Activated B cell treated with CpG ODN at 0.5 μM for 24 hours (primary cell): ENCODE measurements at regions of chr10 and their contacts with region 1.

Region 1: GRCh38 chr10:45373576-45374349 is at the start of gene ALOX5:
- DNase-seq: peak; percentile 67
- ATAC-seq: peak; percentile 53
- H3K4me3 Mint-ChIP-seq: peak within 1 kb of the TSS; percentile 94
- H3K27ac Mint-ChIP-seq: peak within 1 kb of the TSS; percentile 93
- H3K4me1 Mint-ChIP-seq: peaks cover 88% of the 10 kb centered on the region
- H3K27me3 Mint-ChIP-seq: no peaks in the 10 kb centered on the region
- CTCF ChIP-seq: no peak
- total RNA-seq, gene ALOX5: 153 and 181 TPM in 2 replicates

Region 2: GRCh38 chr10:45000752-45001380 is 372.9 kb before region 1 on chr10 and contains the start of gene ZNF22:
- CTCF ChIA-PET with region 1: no interaction called
- POLR2A ChIA-PET with region 1: no interaction called
- intact Hi-C with region 1: loop called (anchors 5 kb)
- DNase-seq: peak; percentile 76
- ATAC-seq: peak; percentile 82
- H3K4me3 Mint-ChIP-seq: peak within 1 kb of the TSS; percentile 90
- H3K27ac Mint-ChIP-seq: peak within 1 kb of the TSS; percentile 93
- H3K4me1 Mint-ChIP-seq: peaks cover 25% of the 10 kb centered on the region
- H3K27me3 Mint-ChIP-seq: no peaks in the 10 kb centered on the region
- CTCF ChIP-seq: no peak
- total RNA-seq, gene ZNF22: 34.2 and 37.5 TPM in 2 replicates

Region 3: DNA sequence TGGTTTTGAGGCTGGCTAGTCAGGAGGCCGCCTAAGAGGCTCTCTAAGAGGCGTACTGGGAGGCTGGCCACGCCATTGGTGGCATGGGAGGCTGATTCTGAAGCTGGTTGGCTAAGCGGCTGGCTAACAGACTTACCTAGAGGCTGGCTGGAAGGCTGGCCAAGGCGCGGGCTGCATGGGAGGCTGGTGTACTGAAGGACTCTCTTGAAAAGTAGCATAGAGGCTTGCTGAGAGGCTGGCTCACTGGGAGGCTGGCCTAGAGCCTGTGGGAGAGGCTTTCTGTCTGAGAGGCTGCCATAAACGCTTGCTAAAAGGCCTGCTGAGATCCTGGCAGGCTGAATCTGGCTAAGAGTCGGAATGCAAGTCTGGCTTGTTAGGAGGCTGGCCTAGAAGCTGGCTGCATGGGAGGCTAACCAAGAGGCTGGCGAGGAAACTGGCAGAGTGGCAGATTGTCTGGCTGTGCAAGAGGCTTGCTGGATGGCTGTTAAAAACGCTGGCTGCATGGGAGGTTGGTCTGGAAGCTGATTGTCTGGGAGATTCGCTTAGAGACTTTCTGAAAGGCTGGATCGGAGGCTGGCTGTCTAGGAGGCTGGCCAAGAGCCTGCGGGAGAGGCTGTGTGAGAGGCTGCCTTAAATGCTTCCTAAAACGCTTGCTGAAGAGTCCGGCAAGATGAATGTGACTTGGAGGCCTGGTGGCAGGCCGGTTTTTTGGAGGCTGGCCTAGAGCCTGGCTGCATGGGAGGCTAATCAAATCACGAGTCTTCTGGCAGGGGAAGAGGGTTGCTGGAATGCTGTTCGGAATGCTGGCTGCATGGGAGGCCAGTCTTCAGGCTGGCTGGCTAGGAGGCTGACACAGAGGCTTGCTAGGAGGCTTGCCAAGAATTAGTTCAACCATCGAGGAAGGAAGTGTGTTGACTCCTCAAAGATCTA is 192.6 kb before region 1 on chr10:
- CTCF ChIA-PET with region 1: no interaction called
- POLR2A ChIA-PET with region 1: no interaction called
- intact Hi-C with region 1: no loop called
- DNase-seq: no peak
- ATAC-seq: no peak
- H3K4me3 Mint-ChIP-seq: no peak overlapping the region
- H3K27ac Mint-ChIP-seq: no peak overlapping the region
- H3K4me1 Mint-ChIP-seq: no peaks in the 10 kb centered on the region
- H3K27me3 Mint-ChIP-seq: no peaks in the 10 kb centered on the region
- CTCF ChIP-seq: no peak

Region 4: DNA sequence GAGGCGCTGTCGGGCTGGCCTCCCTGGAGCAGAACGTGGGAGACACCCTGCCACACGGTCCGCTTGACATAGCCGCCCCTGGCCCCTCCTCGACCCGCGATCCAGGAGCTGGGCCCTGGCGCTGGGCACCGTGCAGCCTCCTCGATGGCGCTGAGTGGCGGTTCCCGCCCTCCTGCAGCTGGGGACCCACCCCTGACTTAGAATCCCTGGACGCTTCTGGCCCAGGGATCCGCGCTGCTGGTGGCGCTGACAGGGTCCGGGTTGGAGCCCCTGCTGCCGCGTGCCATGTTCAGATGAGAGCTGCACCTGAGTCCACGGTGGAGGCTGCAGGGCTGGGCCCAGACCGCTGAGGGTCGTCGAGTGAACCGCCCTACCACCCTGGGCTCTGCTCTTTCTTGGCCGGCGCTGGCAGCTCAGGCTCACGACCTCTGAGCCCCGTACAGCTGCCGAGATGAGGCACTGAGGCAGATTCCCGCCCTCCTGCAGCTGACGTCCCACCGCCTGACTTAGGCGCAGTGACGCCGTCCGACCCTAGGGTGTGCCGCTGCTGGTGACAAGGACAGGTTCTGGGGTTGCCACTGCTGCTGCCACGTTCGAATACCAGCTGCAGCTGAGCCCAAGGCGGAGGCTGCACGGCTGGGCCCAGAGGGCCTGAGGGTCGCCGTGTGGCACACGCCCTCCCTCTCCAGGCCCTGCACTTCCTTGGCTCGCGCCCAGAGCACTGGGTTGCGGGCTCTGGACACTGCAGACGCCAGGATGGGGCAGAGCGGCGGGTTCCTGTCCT is 175.0 kb before region 1 on chr10:
- CTCF ChIA-PET with region 1: no interaction called
- POLR2A ChIA-PET with region 1: no interaction called
- intact Hi-C with region 1: no loop called
- DNase-seq: no peak
- ATAC-seq: no peak
- H3K4me3 Mint-ChIP-seq: no peak overlapping the region
- H3K27ac Mint-ChIP-seq: no peak overlapping the region
- H3K4me1 Mint-ChIP-seq: no peaks in the 10 kb centered on the region
- H3K27me3 Mint-ChIP-seq: peaks cover 6% of the 10 kb centered on the region
- CTCF ChIP-seq: no peak

Region 5: DNA sequence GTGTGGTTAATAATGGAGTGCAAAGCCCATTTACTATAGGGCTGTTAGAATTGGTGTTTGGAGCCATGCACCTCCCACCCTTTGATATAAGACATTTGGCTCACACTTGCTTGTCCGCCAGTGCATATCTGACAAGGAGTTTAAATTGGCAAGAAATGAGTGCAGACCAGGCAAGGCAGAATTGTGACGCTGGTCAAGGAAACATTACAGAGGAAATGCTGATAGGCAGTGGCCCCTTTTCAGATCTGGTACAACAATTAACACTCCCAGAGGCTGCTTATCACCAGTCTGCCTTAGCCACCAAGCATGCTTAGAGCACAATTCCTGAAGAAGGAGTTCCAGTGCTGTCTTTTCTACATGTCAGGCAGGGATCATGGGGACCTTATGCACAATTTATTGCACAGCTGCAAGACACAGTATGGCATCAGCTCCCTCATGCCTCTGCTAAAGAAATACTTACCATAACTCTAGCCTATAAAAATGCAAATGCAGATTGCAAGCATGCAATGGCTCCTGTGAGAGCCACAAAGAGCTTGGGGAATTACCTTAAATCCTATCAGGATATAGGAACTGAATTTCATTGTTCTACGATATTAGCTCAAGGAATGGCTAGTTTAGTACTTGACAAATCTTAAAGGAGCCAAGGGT is 93.5 kb before region 1 on chr10:
- CTCF ChIA-PET with region 1: no interaction called
- POLR2A ChIA-PET with region 1: no interaction called
- intact Hi-C with region 1: no loop called
- DNase-seq: no peak
- ATAC-seq: no peak
- H3K4me3 Mint-ChIP-seq: no peak overlapping the region
- H3K27ac Mint-ChIP-seq: no peak overlapping the region
- H3K4me1 Mint-ChIP-seq: no peaks in the 10 kb centered on the region
- H3K27me3 Mint-ChIP-seq: no peaks in the 10 kb centered on the region
- CTCF ChIP-seq: no peak

Region 6: GRCh38 chr10:45308707-45309106 is 65.1 kb before region 1 on chr10:
- CTCF ChIA-PET with region 1: interaction called, 3 read pairs
- POLR2A ChIA-PET with region 1: interaction called, 3 read pairs
- intact Hi-C with region 1: loop called (anchors 5 kb)
- DNase-seq: no peak
- ATAC-seq: peak; percentile 18
- H3K4me3 Mint-ChIP-seq: no peak overlapping the region
- H3K27ac Mint-ChIP-seq: no peak overlapping the region
- H3K4me1 Mint-ChIP-seq: peaks cover 3% of the 10 kb centered on the region
- H3K27me3 Mint-ChIP-seq: no peaks in the 10 kb centered on the region
- CTCF ChIP-seq: no peak

Region 7: GRCh38 chr10:45404087-45404769 is 30.5 kb after region 1 on chr10:
- CTCF ChIA-PET with region 1: no interaction called
- POLR2A ChIA-PET with region 1: no interaction called
- intact Hi-C with region 1: loop called (anchors 2 kb)
- DNase-seq: no peak
- ATAC-seq: peak; percentile 84
- H3K4me3 Mint-ChIP-seq: no peak overlapping the region
- H3K27ac Mint-ChIP-seq: peak overlapping the region; percentile 72
- H3K4me1 Mint-ChIP-seq: peaks cover 58% of the 10 kb centered on the region
- H3K27me3 Mint-ChIP-seq: no peaks in the 10 kb centered on the region
- CTCF ChIP-seq: no peak

Region 8: DNA sequence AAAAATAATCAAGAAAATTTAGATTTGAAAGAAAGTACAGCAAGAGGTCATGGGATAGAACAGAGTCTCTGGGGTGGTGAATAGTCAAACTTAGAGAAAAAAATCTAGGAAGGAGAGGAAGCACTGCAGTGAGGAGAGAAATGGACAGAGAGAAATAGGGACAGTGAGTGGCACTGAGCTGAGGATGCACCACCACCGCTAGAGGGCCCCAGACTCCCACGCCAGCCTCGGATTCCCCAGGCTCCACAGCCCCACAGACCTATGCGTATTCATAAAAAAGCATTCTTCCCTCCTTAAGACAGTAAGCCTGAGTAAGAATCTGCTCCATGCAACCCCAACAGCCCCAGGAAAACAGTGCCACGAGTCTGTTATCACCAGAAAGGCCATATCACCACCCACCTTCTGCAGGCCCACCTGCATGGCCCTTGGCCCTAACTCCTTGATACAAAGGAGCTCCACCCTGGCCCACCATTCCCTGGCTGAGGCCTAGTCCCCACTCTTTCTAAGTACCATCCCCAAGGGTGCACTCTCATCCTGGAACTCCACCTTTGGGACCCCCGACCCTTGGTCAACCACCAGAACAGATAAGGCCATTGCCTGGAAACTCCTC is 91.3 kb after region 1 on chr10:
- CTCF ChIA-PET with region 1: interaction called, 7 read pairs
- POLR2A ChIA-PET with region 1: interaction called, 43 read pairs
- intact Hi-C with region 1: loop called (anchors 1 kb)
- DNase-seq: peak; percentile 70
- ATAC-seq: peak; percentile 68
- H3K4me3 Mint-ChIP-seq: peak overlapping the region; percentile 45
- H3K27ac Mint-ChIP-seq: peak overlapping the region; percentile 98
- H3K4me1 Mint-ChIP-seq: peaks cover 90% of the 10 kb centered on the region
- H3K27me3 Mint-ChIP-seq: no peaks in the 10 kb centered on the region
- CTCF ChIP-seq: peak; percentile 60

Region 9: GRCh38 chr10:45672181-45673073 is 298.7 kb after region 1 on chr10 and contains the start of gene ZFAND4:
- CTCF ChIA-PET with region 1: no interaction called
- POLR2A ChIA-PET with region 1: interaction called, 3 read pairs
- intact Hi-C with region 1: loop called (anchors 5 kb)
- DNase-seq: peak; percentile 92
- ATAC-seq: peak; percentile 95
- H3K4me3 Mint-ChIP-seq: peak within 1 kb of the TSS; percentile 87
- H3K27ac Mint-ChIP-seq: peak within 1 kb of the TSS; percentile 89
- H3K4me1 Mint-ChIP-seq: peaks cover 28% of the 10 kb centered on the region
- H3K27me3 Mint-ChIP-seq: no peaks in the 10 kb centered on the region
- CTCF ChIP-seq: no peak
- total RNA-seq, gene ZFAND4: 19.8 and 22.1 TPM in 2 replicates